Naive thymus-derived CD4-positive, alpha-beta T cell (primary cell): ENCODE measurements at regions of chr15 and their contacts with region 1.

Region 1: DNA sequence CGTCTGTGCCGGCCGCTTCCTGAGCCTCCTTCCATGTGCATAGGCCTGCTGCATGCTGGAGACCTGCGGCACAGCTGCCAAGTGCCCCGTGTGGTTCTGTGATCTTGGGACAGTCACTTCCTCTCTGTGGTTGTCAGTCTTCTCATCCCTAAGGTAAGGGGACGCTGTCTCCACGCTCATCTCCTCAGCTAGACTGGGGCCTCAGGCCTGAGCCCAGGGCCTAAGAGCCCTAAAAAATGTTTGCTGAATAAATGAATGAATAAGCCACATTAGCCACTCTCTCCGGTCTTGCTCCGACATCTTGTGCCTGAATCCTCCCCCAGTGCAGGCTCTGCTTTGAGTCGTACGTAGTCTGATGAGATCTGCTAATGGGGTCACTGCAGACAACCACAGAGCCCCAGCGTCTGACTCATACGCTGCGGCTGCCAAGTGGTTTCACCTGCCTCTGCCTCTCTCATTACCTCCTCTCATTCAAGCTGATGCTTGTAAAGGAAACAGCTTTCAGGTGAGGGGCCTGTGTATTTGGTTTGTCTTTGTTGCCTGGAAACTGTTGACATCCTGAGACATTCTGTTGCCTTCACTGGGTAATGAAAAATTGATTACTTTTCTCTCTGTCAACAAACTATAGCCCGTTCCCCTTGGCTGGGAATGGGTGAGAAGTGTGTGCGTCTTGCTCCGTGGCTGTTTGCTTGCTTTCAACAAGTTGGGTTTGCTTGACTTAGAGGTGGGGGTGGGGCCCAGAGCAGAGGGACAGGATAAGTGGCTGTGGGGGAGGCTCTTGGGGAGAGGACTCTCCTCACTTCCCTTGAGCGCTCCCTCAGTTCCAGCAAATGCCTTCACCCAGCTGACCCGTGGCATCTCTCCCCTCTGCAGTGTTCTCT is 15.9 kb downstream of the RPLP1 start:
- DNase-seq: peak; percentile 49 to 92 (median 84)
- ATAC-seq: peak; percentile 95
- H3K4me3 ChIP-seq: peak overlapping the region; percentile 3
- H3K4me3 Mint-ChIP-seq: peak overlapping the region; percentile 46 to 78 (median 63)
- H3K27ac ChIP-seq: peak overlapping the region; percentile 82
- H3K27ac Mint-ChIP-seq: peak overlapping the region; percentile 86 to 98 (median 94)
- H3K4me1 ChIP-seq: peaks cover 22 to 27% of the 10 kb centered on the region in 2 donors
- H3K4me1 Mint-ChIP-seq: peaks cover 17 to 36% (median 22%) of the 10 kb centered on the region in 7 donors
- H3K27me3 ChIP-seq: no peaks in the 10 kb centered on the region
- H3K27me3 Mint-ChIP-seq: peaks cover 0 to 32% (median 0%) of the 10 kb centered on the region in 5 donors

Region 2: DNA sequence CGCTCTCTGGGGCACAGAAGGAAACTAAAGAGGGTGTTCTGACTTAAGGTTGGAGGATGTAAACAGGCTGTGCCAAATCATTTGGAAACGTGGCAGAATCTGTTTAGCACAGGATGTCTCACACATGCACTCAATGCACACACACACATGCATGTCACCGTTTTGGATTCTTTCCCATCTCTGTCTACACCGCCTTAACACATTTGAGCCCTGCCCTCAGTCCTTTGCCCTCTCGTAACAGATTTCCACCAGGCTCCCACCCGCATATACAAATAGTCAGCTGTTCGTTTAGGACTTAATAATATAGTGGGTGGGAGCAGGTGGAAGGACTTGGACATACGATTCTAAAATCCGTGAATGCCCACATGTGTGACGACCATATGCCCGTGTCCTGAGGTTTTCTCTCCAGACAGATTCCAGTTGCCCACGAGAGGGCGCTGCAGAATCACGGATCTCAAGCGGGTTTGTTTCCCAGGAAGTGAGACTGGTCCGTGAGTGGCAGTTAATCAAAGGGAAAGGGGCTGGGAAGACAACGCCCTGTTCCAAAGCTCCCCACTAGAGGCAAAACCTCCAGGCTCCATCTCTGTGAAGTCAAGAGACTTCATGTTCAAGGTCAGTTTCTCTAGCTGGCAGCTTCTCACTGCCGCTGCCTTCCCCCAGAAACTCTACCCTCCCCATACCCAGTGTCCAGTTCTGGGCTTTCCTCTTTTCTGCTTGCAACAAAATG is 409.5 kb before region 1 on chr15:
- CTCF ChIA-PET with region 1: no interaction called
- POLR2A ChIA-PET with region 1: no interaction called
- intact Hi-C with region 1: loop called (anchors 2 to 5 kb)
- DNase-seq: peak; percentile 29 to 69 (median 59)
- ATAC-seq: peak; percentile 66
- H3K4me3 ChIP-seq: no peak overlapping the region
- H3K4me3 Mint-ChIP-seq: peak overlapping the region in 5 of 10 donors; percentile 21 to 61 (median 52)
- H3K27ac ChIP-seq: no peak overlapping the region
- H3K27ac Mint-ChIP-seq: peak overlapping the region in 4 of 9 donors; percentile 30 to 78 (median 58)
- H3K4me1 ChIP-seq: peaks cover 7 to 23% of the 10 kb centered on the region in 2 donors
- H3K4me1 Mint-ChIP-seq: peaks cover 5 to 38% (median 33%) of the 10 kb centered on the region in 7 donors
- H3K27me3 ChIP-seq: no peaks in the 10 kb centered on the region
- H3K27me3 Mint-ChIP-seq: peaks cover 0 to 18% (median 5%) of the 10 kb centered on the region in 5 donors

Region 3: DNA sequence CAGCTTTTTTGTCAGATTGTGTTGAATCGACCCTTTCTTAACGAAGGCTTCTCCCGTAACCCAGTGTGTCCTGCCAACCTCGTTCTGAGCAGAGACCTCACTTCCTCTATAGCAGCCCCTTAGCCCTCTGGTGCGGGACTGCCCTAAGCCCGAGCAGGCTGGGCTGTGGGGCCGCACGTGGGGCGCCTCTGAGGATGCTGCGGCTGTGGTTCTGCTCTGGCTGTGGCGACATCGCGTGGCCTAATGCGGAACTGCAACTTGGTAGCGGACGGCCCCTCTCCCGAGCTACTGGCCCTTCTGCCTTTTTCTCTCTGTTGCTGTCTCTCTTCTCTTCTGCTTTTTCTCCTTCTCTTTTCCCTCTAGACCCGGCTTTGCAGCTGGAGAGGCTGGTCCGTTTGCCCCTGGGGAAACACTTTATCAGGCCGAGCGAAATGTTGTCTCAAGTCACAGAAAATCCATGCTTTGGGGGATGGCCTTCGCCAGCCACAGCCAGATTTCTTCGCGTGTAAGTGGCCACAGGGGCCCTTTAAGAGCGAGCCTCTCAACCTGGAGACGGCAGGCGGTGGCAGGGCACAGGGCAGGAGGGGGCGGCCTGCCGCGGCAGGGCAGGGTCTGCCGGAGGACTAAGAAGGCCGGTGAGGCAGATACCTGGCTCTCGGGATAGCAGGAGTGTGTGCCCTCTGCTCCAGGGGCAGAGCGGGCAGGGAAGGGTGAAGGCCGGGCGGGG is 73.8 kb before region 1 on chr15:
- CTCF ChIA-PET with region 1: no interaction called
- POLR2A ChIA-PET with region 1: no interaction called
- intact Hi-C with region 1: loop called in 1 of 2 experiments (anchors 1 kb)
- DNase-seq: peak; percentile 44 to 86 (median 71)
- ATAC-seq: peak; percentile 97
- H3K4me3 ChIP-seq: no peak overlapping the region
- H3K4me3 Mint-ChIP-seq: no peak overlapping the region
- H3K27ac ChIP-seq: no peak overlapping the region
- H3K27ac Mint-ChIP-seq: peak overlapping the region in 1 of 9 donors; percentile 6
- H3K4me1 ChIP-seq: no peaks in the 10 kb centered on the region
- H3K4me1 Mint-ChIP-seq: peaks cover 6 to 12% (median 7%) of the 10 kb centered on the region in 7 donors
- H3K27me3 ChIP-seq: no peaks in the 10 kb centered on the region
- H3K27me3 Mint-ChIP-seq: peaks cover 0 to 8% (median 0%) of the 10 kb centered on the region in 5 donors

Region 4: DNA sequence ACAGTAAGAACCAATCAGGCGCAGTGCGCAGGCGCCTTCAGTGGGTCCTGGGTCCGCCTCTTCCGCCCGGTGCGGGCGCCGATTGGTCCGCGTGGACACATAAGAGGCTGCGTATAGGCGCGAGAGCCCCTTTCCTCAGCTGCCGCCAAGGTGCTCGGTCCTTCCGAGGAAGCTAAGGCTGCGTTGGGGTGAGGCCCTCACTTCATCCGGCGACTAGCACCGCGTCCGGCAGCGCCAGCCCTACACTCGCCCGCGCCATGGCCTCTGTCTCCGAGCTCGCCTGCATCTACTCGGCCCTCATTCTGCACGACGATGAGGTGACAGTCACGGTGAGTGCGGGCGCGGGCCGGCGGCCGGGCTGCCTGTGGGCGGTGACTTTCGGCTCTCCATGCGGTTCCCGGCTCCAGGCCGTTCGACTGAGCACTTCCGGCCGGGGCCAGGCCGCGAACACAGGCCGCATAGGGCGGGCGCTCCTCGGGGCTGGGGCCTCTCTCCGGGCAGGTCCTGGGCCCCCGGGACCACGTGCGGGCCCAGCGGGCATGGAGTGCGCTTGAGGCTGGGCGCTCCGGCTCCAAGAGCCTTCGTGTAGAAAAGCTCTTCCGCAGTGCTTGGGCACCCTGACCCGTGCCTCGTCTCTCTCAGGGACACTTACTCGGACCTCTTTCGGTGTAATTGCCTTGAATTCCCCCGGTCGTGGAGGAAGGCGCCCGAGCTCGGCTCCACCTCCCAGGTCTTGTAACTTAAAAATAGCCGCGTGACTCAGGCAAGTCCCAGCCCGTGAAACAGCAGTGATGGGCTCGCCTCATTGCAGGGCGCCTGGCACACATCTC is 15.6 kb before region 1 on chr15 and contains the start of gene RPLP1:
- CTCF ChIA-PET with region 1: interaction called, 17 read pairs
- POLR2A ChIA-PET with region 1: interaction called, 138 read pairs
- intact Hi-C with region 1: loop called (anchors 1 to 2 kb)
- DNase-seq: peak; percentile 93 to 97 (median 96)
- ATAC-seq: peak; percentile 93
- H3K4me3 ChIP-seq: peak within 1 kb of the TSS; percentile 82
- H3K4me3 Mint-ChIP-seq: peak within 1 kb of the TSS; percentile 91 to 100 (median 99)
- H3K27ac ChIP-seq: peak within 1 kb of the TSS; percentile 84
- H3K27ac Mint-ChIP-seq: peak within 1 kb of the TSS; percentile 96 to 100 (median 98)
- H3K4me1 ChIP-seq: peaks cover 14 to 33% of the 10 kb centered on the region in 2 donors
- H3K4me1 Mint-ChIP-seq: peaks cover 29 to 52% (median 42%) of the 10 kb centered on the region in 7 donors
- H3K27me3 ChIP-seq: no peaks in the 10 kb centered on the region
- H3K27me3 Mint-ChIP-seq: no peaks in the 10 kb centered on the region
- total RNA-seq, gene RPLP1: 1,719 to 2,941 (median 2,467) TPM

Region 5: DNA sequence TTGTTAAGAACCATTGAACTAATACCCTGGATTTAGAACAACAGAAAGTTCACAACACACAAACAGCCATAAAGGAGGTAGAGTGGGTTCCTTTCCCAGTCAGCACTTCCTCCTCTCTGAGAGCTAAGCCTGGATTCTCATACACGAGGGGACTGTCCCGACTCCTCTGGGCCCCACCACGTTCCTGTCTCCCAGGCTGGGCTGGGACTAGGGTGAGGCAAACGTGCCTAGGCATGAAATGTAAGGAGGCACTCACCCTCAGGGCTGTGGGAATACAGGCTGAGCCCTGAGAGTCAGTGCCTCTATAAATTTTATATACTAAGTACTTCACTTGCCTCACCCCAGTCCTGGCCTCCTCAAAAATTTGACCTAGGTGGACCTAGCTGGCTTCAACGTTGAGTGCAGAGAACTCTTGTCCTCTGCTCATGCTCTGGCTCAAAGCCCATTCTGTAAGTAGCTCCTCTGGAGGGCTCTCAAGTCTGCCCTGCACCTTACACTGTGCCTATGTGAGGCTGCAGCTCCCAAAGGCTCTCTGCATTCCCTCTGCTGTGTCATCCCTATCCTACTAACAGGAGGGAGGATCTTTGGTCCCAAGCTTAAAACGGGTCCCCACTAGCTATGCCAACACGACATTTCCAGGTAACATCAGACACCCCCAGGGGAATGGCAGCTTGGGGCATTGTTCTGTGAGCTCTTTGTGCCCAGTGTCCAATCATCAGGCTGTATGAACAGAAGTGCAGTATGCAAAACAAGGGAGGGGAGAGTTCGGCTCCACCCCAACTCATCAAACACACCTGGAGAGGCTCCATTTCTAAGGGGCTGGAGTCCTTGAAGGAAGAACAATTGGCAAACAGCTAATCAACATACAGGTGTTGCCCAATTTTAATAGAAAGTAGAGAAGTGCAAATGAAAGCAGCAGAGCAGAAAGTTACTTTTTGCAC is 217.3 kb after region 1 on chr15:
- CTCF ChIA-PET with region 1: no interaction called
- POLR2A ChIA-PET with region 1: no interaction called
- intact Hi-C with region 1: no loop called
- DNase-seq: no peak
- ATAC-seq: no peak
- H3K4me3 ChIP-seq: no peak overlapping the region
- H3K4me3 Mint-ChIP-seq: no peak overlapping the region
- H3K27ac ChIP-seq: no peak overlapping the region
- H3K27ac Mint-ChIP-seq: no peak overlapping the region
- H3K4me1 ChIP-seq: no peaks in the 10 kb centered on the region
- H3K4me1 Mint-ChIP-seq: peaks cover 0 to 9% (median 0%) of the 10 kb centered on the region in 7 donors
- H3K27me3 ChIP-seq: no peaks in the 10 kb centered on the region
- H3K27me3 Mint-ChIP-seq: peaks cover 0 to 6% (median 0%) of the 10 kb centered on the region in 5 donors

Region 6: DNA sequence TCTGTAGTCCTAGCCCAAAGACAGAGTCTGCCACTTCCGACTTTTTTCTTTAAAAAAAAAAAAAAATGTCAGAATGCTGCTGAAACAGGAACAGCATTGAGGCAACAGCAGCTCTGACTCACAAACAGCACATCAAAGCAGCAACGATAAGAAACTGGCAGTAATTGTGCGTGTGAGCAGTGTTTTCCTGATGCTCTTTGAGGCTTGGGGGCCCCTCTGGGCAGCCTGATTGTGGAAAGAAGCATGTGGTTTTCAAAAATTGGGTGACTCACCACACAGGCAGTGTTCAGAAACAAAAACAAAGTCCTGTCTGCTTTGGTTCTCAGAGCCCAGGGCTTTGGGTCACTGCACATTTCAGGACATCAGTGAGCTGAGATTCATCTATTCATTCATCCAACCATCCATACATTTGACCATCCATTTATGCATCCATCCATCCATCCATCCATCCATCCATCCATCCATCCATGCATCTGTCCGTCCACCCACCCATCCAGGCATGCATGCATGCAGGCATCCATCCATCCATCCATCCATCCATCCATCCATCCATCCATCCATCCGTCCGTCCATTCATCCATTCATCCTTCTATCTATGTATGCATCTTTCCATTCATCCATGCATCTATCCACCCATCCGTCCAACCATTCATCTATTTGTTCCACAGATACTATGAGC is 292.5 kb after region 1 on chr15:
- CTCF ChIA-PET with region 1: interaction called, 3 read pairs
- POLR2A ChIA-PET with region 1: no interaction called
- intact Hi-C with region 1: loop called (anchors 1 to 2 kb)
- DNase-seq: peak; percentile 34 to 88 (median 81)
- ATAC-seq: peak; percentile 84
- H3K4me3 ChIP-seq: peak overlapping the region; percentile 34
- H3K4me3 Mint-ChIP-seq: peak overlapping the region; percentile 51 to 86 (median 67)
- H3K27ac ChIP-seq: no peak overlapping the region
- H3K27ac Mint-ChIP-seq: peak overlapping the region; percentile 48 to 95 (median 88)
- H3K4me1 ChIP-seq: peaks cover 57 to 61% of the 10 kb centered on the region in 2 donors
- H3K4me1 Mint-ChIP-seq: peaks cover 52 to 79% (median 70%) of the 10 kb centered on the region in 7 donors
- H3K27me3 ChIP-seq: no peaks in the 10 kb centered on the region
- H3K27me3 Mint-ChIP-seq: peaks cover 0 to 25% (median 7%) of the 10 kb centered on the region in 5 donors

Region 7: DNA sequence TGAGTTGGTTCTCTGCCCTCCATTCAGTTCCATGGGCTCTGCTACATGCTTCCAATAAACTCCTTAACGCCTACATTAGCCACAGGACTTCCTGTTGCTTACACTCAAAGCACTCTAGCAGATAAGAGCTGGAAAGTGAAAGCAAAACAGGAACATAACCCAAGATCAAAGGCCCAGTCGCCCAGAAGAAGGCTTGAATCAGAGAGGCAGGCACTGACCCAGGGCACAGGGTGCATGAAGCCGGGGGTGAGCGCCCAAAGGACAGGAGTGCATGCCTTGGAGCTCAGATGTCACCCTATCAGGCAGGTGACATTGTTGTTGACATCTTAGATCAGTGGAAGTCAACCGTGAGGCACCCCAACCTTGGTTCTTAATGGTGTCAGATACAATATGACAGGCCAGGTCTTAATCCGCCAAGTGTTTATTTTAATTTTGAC is 1059.8 kb after region 1 on chr15:
- CTCF ChIA-PET with region 1: no interaction called
- POLR2A ChIA-PET with region 1: no interaction called
- intact Hi-C with region 1: loop called (anchors 1 to 5 kb)
- DNase-seq: peak in 8 of 9 donors; percentile 62 to 81 (median 77)
- ATAC-seq: peak; percentile 92
- H3K4me3 ChIP-seq: peak overlapping the region; percentile 55
- H3K4me3 Mint-ChIP-seq: peak overlapping the region; percentile 78 to 86 (median 82)
- H3K27ac ChIP-seq: peak overlapping the region; percentile 65
- H3K27ac Mint-ChIP-seq: peak overlapping the region; percentile 87 to 99 (median 95)
- H3K4me1 ChIP-seq: peaks cover 36 to 64% of the 10 kb centered on the region in 2 donors
- H3K4me1 Mint-ChIP-seq: peaks cover 42 to 99% (median 89%) of the 10 kb centered on the region in 7 donors
- H3K27me3 ChIP-seq: no peaks in the 10 kb centered on the region
- H3K27me3 Mint-ChIP-seq: peaks cover 0 to 4% (median 0%) of the 10 kb centered on the region in 5 donors